Posterior cingulate gyrus (tissue), 11 donors: ENCODE measurements at regions of chr1 and their contacts with region 1.

Region 1: GRCh38 chr1:39816415-39817090 is 27.9 kb upstream of the BMP8B start:
- DNase-seq: peak; percentile 23 to 96 (median 74)

Region 2: GRCh38 chr1:39901698-39902459 is 85.3 kb after region 1 on chr1 and contains the start of gene MYCL:
- intact Hi-C with region 1: loop called (anchors 1 kb)
- DNase-seq: peak; percentile 57 to 97 (median 72)

Region 3: GRCh38 chr1:39919545-39919944 is 103.0 kb after region 1 on chr1:
- intact Hi-C with region 1: loop called (anchors 5 kb)
- DNase-seq: peak in 3 of 10 donors; percentile 19 to 80 (median 37)

Region 4: GRCh38 chr1:39973503-39974135 is 157.1 kb after region 1 on chr1:
- intact Hi-C with region 1: loop called (anchors 1 kb)
- DNase-seq: peak; percentile 42 to 97 (median 82)